ENCODE measurements at regions of chr20 and their contacts with region 1.

Region 1: DNA sequence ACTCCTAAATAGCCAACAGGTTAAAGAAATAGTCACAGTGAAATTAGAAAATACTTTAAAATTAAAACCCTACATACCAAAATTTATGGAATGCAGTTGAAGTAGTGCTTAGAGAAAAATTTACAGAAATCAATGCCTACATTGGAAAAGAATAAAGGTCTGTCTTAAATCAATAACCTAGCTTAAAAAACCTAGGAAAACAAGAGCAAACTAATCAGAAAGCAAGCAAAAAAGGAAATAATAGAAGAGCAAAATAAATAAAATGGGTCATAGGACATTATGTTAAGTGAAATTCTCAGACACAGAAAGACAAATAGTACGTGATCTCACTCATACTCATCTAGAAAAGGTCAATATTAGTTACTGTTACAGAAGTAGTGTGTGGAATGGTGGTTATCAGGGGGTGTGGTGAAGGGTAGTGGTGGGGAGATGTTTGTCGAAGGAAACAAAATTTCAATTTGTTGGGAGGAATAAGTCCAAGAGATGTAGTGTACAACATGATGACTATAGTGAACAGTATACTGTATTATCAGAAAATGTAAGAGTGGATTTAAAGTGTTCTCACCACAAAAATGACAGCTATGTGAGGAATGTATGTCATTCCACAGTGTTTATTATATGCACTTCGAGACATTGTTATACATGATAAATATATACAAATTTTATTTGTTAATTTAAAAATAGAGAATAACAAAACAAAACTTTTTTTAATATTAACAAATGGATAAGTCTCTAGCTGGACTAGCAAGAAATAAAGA is 423.6 kb downstream of the CDH26 start:
- DNase-seq: no peak
- ATAC-seq: no peak
- H3K4me3 ChIP-seq: no peak overlapping the region
- H3K27ac ChIP-seq: no peak overlapping the region
- H3K4me1 ChIP-seq: no peaks in the 10 kb centered on the region
- H3K27me3 ChIP-seq: no peaks in the 10 kb centered on the region
- CTCF ChIP-seq: no peak
- POLR2A ChIP-seq: no peak

Region 2: DNA sequence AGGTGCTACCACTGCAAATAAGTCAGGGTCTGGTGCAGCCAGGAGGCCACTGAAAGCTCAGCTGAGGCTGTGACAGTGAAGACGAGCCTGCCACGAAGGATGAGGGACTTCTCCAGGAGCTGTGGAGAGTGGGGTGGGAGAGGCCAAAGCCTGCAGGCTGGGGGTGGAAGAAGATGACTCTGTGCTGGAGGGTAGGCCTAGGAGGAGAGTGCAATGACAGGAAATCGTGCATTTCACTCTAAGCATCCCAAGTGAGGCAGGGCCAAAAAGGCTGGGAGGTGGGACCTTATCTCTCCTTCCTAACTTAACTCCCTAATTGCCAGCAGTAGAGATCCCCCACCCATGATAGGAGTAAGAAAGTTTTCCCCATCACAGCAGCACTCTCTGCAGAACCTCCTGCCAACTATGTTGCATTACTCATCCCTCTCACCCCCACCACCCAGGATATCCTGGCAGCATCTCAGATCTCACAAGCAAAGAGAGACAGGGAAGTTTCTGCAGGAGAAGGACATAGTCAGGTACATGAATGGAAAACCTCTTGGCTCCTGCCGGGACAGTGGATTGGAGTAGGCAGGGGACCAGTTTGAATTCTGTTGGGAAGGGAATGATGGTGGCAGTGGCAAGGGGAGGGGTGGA is 42.6 kb after region 1 on chr20:
- in situ Hi-C with region 1: no loop called
- intact Hi-C with region 1: no loop called
- DNase-seq: no peak
- ATAC-seq: no peak
- H3K4me3 ChIP-seq: no peak overlapping the region
- H3K27ac ChIP-seq: no peak overlapping the region
- H3K4me1 ChIP-seq: no peaks in the 10 kb centered on the region
- H3K27me3 ChIP-seq: no peaks in the 10 kb centered on the region
- CTCF ChIP-seq: no peak
- POLR2A ChIP-seq: no peak

Region 3: GRCh38 chr20:60467078-60467477 is 85.3 kb after region 1 on chr20:
- in situ Hi-C with region 1: no loop called
- intact Hi-C with region 1: loop called (anchors 10 kb)
- DNase-seq: no peak
- ATAC-seq: no peak
- H3K4me3 ChIP-seq: no peak overlapping the region
- H3K27ac ChIP-seq: no peak overlapping the region
- H3K4me1 ChIP-seq: no peaks in the 10 kb centered on the region
- H3K27me3 ChIP-seq: no peaks in the 10 kb centered on the region
- CTCF ChIP-seq: no peak
- POLR2A ChIP-seq: no peak

Region 4: GRCh38 chr20:60669211-60669610 is 287.4 kb after region 1 on chr20:
- in situ Hi-C with region 1: no loop called
- intact Hi-C with region 1: no loop called
- DNase-seq: no peak
- ATAC-seq: no peak
- H3K4me3 ChIP-seq: no peak overlapping the region
- H3K27ac ChIP-seq: no peak overlapping the region
- H3K4me1 ChIP-seq: no peaks in the 10 kb centered on the region
- H3K27me3 ChIP-seq: no peaks in the 10 kb centered on the region
- CTCF ChIP-seq: no peak
- POLR2A ChIP-seq: no peak

Measured in gastrocnemius medialis (tissue), 4 donors.